RWPE1 (cell line): ENCODE measurements at regions of chr2 and their contacts with region 1.

Region 1: DNA sequence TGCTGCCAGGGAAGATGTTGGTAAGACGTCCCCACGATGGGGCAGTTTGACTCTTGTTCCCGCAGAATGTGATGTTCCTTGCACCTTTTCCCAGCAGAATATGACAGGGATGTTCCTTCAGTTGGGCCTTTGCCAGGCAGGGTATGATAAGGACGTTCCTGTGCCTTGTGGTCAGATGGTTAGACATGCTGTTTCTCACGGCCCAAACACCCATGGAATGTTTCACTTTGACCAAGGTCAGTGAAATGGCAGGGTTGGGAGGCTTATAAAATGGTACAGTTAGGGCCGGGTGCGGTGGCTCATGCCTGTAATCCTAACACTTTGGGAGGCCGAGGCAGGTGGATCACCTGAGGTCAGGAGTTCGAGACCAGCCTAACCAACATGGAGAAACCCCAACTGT is 40.3 kb upstream of the YPEL5 start:
- DNase-seq: no peak
- H3K27ac ChIP-seq: no peak overlapping the region
- CTCF ChIP-seq: no peak

Region 2: GRCh38 chr2:29541781-29542180 is 564.8 kb before region 1 on chr2:
- CTCF ChIA-PET with region 1: no interaction called
- POLR2A ChIA-PET with region 1: no interaction called
- DNase-seq: no peak
- H3K27ac ChIP-seq: no peak overlapping the region
- CTCF ChIP-seq: no peak

Region 3: DNA sequence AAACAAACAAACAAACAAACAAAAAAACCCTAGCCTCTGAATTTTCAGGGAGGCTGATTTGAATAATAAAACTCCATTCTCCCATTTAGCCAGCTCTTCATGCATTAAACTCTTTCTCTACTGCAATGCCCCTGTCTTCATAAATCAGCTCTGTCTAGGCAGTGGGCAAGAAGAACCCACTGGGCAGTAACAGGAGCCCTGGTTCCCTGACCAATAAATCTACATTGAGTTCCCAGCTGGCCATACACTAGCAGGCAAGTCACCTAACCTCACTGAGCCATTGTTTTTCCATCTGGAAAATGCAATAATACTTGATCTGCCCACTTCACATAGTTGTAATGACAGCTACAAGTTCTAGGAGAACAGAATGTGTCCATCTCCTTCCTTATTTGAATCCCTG is 17.4 kb before region 1 on chr2:
- CTCF ChIA-PET with region 1: no interaction called
- POLR2A ChIA-PET with region 1: interaction called, 16 read pairs
- DNase-seq: no peak
- H3K27ac ChIP-seq: no peak overlapping the region
- CTCF ChIP-seq: no peak

Region 4: GRCh38 chr2:30208452-30208851 is 101.9 kb after region 1 on chr2:
- CTCF ChIA-PET with region 1: no interaction called
- POLR2A ChIA-PET with region 1: no interaction called
- DNase-seq: peak; percentile 64
- H3K27ac ChIP-seq: no peak overlapping the region
- CTCF ChIP-seq: peak; percentile 87